PC-3 (cell line): ENCODE measurements at regions of chr12 and their contacts with region 1.

Region 1: GRCh38 chr12:105053116-105053572 is 31.1 kb downstream of the ALDH1L2 start:
- DNase-seq: peak; percentile 97
- ATAC-seq: peak; percentile 95
- H3K4me3 ChIP-seq: no peak overlapping the region
- H3K27ac ChIP-seq: no peak overlapping the region
- H3K4me1 ChIP-seq: no peaks in the 10 kb centered on the region; the same call in 1 of the 2 replicates
- H3K27me3 ChIP-seq: no peaks in the 10 kb centered on the region
- CTCF ChIP-seq: peak; percentile 99

Region 2: DNA sequence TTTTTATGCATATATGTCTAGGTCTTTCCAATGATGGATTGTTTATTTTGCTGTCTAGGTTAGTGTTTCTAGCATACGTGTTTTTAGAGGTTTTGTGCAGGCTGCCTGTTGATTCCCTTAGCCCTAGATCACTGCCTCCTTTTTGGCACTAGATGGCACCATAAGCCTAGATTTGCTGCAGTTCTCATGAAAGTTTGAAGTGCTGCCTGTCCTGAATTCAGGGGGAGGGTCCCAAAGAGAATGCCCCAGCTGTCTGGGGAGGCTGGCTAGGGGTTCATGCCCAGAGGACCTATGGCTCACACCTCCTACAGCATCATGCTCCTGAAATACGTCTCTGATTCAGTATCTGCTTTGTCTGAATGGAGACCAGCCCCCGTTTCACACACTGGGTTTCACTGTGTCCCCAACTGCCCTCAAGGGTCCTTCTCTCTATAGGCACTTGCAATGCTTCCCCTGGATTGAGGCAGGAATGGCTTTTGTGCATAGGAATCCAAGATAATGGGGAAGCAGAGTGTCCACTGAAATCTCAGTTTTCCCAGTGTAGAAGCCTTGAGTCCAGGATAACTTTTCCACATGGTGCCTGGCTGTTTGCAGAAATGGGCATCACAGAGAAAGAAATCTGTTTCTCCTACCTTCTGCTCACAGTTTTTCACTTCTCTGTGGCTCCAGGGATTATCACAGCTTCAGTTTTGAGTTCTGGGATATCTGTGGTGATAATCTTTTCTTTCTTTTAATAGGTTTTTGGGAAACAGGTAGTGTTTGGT is 851.7 kb before region 1 on chr12:
- CTCF ChIA-PET with region 1: no interaction called
- POLR2A ChIA-PET with region 1: no interaction called
- intact Hi-C with region 1: loop called (anchors 2 kb)
- DNase-seq: peak; percentile 84
- ATAC-seq: peak; percentile 93
- H3K4me3 ChIP-seq: no peak overlapping the region
- H3K27ac ChIP-seq: 0 out of 2 replicates have a peak overlapping the region, but pooled peaks have one; percentile 0
- H3K4me1 ChIP-seq: peaks cover 6% of the 10 kb centered on the region; the same call in 1 of the 2 replicates
- H3K27me3 ChIP-seq: no peaks in the 10 kb centered on the region
- CTCF ChIP-seq: peak; percentile 98

Region 3: DNA sequence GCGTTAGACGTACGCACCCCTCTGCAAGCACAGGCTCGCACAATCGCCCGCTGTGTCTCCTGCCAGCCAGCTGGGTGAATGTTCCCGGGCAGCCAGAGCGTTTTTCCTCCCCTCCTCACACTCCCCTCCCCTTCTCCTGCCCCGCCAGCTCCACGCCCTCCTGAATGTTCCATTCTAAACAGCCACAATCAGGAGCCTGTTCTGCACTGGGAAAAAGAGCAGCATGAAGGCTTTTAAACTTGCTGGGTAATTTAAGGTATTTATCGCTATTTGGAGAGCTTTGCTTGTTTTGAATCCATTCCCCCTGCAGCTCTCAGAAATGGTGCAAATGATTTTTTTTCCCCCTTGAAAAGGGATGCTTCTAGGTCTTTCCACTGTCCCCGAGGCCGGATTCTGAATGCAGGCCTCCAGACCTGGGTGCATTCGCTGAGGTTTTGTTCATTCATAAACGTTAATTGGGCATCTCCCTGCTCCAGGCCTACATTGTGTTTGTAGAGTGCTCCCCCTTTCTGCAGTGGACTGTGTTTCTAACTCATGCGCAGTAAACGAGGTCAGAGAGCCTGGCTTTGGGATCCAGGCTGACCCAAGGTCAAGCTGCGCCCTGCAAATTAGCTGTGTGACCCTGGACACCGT is 383.9 kb before region 1 on chr12:
- CTCF ChIA-PET with region 1: no interaction called
- POLR2A ChIA-PET with region 1: no interaction called
- intact Hi-C with region 1: no loop called
- DNase-seq: peak; percentile 36
- ATAC-seq: peak; percentile 36
- H3K4me3 ChIP-seq: no peak overlapping the region
- H3K27ac ChIP-seq: no peak overlapping the region
- H3K4me1 ChIP-seq: peaks cover 57% of the 10 kb centered on the region
- H3K27me3 ChIP-seq: no peaks in the 10 kb centered on the region
- CTCF ChIP-seq: no peak; the same call in 1 of the 2 replicates

Region 4: DNA sequence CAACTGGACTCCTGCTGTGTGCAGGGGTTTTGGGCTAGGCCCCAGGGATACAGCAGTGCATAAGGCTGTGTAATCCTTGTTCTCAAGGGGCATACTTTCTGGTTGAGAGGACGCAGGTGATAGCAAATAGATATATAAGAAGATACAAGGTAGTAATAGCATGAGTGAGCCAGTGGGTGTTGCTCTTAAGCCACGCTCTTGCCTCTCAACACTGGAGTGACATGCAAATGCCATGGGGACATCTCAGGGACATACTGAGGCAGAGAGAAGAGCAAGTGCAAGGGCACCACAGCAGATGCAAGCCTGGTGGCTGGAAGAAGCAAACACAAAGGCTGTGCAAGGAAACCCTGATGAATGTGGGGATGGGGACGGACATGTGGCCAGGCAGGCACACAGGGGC is 373.1 kb before region 1 on chr12:
- CTCF ChIA-PET with region 1: no interaction called
- POLR2A ChIA-PET with region 1: no interaction called
- intact Hi-C with region 1: loop called (anchors 1 kb)
- DNase-seq: peak; percentile 49
- ATAC-seq: peak; percentile 64
- H3K4me3 ChIP-seq: no peak overlapping the region
- H3K27ac ChIP-seq: no peak overlapping the region
- H3K4me1 ChIP-seq: peaks cover 21% of the 10 kb centered on the region
- H3K27me3 ChIP-seq: no peaks in the 10 kb centered on the region
- CTCF ChIP-seq: peak; percentile 64

Region 5: DNA sequence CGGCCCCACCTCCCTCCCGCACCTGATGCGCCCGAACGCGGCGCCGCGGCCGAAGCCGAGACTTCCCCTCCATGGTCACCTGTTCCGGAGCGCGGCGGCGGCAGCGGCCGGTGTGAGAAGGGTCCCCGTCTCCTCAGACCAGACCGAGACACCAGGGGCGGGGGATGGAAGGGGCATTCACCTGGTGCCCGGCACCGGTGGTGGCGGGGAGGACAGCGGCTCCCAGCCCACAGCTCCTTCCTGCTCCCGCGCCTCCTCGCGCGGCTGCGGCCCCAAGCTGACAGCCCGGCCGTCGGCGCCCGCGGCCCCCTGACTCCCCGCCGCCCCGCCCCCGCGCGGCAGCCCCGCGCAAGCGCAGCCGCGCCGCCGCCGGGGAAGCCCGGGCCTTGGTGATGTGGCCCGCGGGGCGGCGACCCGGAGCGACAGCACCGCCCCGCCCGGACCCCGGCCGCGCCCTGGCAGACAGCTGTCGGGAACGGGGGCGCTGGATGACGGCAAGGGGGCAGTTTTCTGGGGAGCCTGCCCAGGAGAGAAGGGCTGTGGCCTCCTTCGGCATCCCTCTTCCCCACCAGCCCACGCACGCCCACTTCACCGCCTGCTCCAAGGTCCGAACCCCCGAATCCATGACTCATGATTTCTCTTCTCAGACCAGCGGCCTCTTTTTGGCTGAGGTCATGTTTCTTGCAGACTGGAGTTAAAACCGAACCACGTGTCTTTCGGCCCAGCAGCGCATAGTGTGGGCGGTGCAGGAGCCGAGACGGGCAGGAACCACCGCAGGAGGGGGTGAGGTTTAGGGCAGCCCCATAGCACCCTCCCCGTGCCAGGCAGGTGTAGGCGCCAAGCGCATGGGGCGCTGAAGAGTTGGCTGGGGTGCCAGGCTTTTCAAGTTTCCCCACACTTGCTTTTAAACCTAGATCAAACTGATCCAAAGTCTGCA is 94.9 kb before region 1 on chr12 and contains the start of gene SLC41A2:
- CTCF ChIA-PET with region 1: no interaction called
- POLR2A ChIA-PET with region 1: no interaction called
- intact Hi-C with region 1: loop called (anchors 2 kb)
- DNase-seq: peak; percentile 89
- ATAC-seq: peak; percentile 82
- H3K4me3 ChIP-seq: peak within 1 kb of the TSS; percentile 79
- H3K27ac ChIP-seq: peak within 1 kb of the TSS; percentile 80
- H3K4me1 ChIP-seq: peaks cover 31% of the 10 kb centered on the region
- H3K27me3 ChIP-seq: no peaks in the 10 kb centered on the region
- CTCF ChIP-seq: peak; percentile 51
- total RNA-seq, gene SLC41A2: 16.3 and 20.4 TPM in 2 replicates

Region 6: GRCh38 chr12:104986022-104986941 is 66.9 kb before region 1 on chr12 and contains the start of gene NOPCHAP1:
- CTCF ChIA-PET with region 1: no interaction called
- POLR2A ChIA-PET with region 1: no interaction called
- intact Hi-C with region 1: loop called (anchors 2 kb)
- DNase-seq: peak; percentile 94
- ATAC-seq: peak; percentile 98
- H3K4me3 ChIP-seq: peak within 1 kb of the TSS; percentile 79
- H3K27ac ChIP-seq: peak within 1 kb of the TSS; percentile 6; the same call in 1 of the 2 replicates
- H3K4me1 ChIP-seq: peaks cover 22% of the 10 kb centered on the region
- H3K27me3 ChIP-seq: no peaks in the 10 kb centered on the region
- CTCF ChIP-seq: no peak
- total RNA-seq, gene NOPCHAP1: 21.8 and 37.8 TPM in 2 replicates

Region 7: GRCh38 chr12:105084251-105085250 is 31.4 kb after region 1 on chr12 and contains the start of gene ALDH1L2:
- CTCF ChIA-PET with region 1: no interaction called
- POLR2A ChIA-PET with region 1: no interaction called
- intact Hi-C with region 1: no loop called
- DNase-seq: peak; percentile 82
- ATAC-seq: peak; percentile 99
- H3K4me3 ChIP-seq: peak within 1 kb of the TSS; percentile 66
- H3K27ac ChIP-seq: no peak within 1 kb of the TSS
- H3K4me1 ChIP-seq: peaks cover 7% of the 10 kb centered on the region
- H3K27me3 ChIP-seq: no peaks in the 10 kb centered on the region
- CTCF ChIP-seq: no peak
- total RNA-seq, gene ALDH1L2: 0.15 and 0.40 TPM in 2 replicates